A673 (cell line): ENCODE measurements at regions of chr22 and their contacts with region 1.

Region 1: GRCh38 chr22:22450343-22450839 is 58.2 kb downstream of the ZNF280B start:
- DNase-seq: no peak
- H3K4me3 ChIP-seq: no peak overlapping the region
- H3K27ac ChIP-seq: no peak overlapping the region
- H3K4me1 ChIP-seq: no peaks in the 10 kb centered on the region
- H3K27me3 ChIP-seq: peaks cover 78% of the 10 kb centered on the region
- CTCF ChIP-seq: no peak

Region 2: DNA sequence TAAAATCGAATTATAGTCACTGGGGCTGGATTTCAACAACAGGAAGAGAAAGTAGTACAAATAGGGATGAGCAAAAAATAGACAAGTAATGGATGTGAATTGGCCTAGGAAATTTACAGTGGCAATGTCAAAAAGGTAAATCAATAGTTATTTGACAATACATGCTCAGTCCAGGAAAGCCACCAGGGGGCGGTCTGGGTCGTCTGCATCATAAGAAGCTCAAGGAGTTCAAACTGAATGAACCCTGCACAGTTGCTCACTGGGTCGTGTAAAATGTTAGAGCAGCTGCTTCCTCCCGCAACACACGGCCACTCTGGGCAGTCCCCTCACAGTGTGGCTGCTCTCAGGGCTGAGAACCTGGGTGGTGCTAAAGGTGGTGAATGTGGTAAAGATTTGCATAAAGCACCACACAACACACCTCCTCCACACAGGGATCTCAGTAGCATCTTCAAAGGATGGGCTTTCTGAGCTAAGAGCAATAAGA is 27.7 kb before region 1 on chr22:
- CTCF ChIA-PET with region 1: interaction called, 28 read pairs
- POLR2A ChIA-PET with region 1: no interaction called
- intact Hi-C with region 1: no loop called
- DNase-seq: peak; percentile 71
- H3K4me3 ChIP-seq: no peak overlapping the region
- H3K27ac ChIP-seq: no peak overlapping the region
- H3K4me1 ChIP-seq: no peaks in the 10 kb centered on the region
- H3K27me3 ChIP-seq: peaks cover 61% of the 10 kb centered on the region
- CTCF ChIP-seq: peak; percentile 94

Region 3: DNA sequence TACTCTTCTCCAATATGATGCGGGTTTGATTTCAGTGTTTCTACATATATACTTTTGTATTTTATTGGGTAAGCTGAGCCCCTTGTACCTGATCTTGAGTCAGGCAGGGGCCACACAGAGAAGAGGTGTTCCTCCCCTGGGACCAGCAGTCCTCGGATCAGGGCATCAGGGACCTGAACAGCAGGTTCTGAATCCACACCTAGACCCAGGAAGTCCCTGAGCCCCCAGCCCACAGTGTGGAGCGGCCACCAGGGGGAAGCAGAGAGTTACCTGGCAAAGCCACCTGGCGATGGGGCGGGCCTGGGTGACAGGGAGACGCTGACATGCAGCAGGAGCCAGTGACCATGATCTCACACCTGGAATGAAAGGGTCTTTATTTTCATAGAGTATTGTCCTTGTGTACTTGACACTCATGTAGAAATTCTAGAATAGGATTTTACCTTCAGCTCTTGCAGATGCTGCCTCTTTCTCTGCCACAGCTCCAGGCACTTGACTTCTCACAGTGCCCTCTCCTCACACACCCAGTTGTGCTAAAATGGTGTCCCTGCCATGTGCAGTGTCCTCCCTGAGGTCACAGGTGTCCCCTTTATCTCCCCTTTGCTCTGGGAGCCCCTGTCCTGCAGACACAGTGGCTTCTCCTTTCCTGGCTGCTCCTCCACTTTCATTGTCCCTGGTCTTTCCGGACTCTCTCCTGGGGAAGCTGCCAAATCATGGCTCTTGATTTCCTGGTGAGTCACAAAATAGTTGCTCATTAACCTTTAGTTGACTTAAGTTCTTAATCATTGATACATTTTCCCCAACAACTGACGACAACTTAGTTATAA is 242.5 kb after region 1 on chr22:
- CTCF ChIA-PET with region 1: no interaction called
- POLR2A ChIA-PET with region 1: no interaction called
- intact Hi-C with region 1: loop called (anchors 10 kb)
- DNase-seq: peak; percentile 30
- H3K4me3 ChIP-seq: no peak overlapping the region
- H3K27ac ChIP-seq: no peak overlapping the region
- H3K4me1 ChIP-seq: no peaks in the 10 kb centered on the region
- H3K27me3 ChIP-seq: no peaks in the 10 kb centered on the region
- CTCF ChIP-seq: peak; percentile 77